ENCODE measurements at regions of chr6 and their contacts with region 1.

Region 1: GRCh38 chr6:7725849-7726415 is at the start of gene BMP6:
- DNase-seq: peak; percentile 96
- ATAC-seq: peak; percentile 95
- total RNA-seq, gene BMP6: 1.6 TPM

Region 2: DNA sequence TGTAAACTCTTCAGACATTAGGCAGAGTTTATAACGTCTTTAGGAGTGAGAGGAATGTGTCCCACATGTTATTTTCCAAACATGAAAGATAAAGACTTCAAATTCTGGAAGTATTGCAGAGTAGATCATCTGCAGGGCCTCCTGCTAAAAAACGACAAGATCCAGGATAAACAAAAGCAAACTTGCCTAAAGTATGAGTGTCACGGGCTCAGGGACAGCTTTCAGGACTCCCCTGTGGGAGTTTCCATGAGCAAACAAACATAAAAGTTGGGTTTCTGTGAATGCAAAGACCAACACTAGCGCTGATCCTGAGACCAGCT is 107.8 kb after region 1 on chr6:
- intact Hi-C with region 1: loop called (anchors 10 kb)
- DNase-seq: no peak
- ATAC-seq: no peak

Region 3: GRCh38 chr6:7910654-7911344 is 184.9 kb after region 1 on chr6 and contains the start of gene TXNDC5:
- intact Hi-C with region 1: loop called (anchors 5 kb)
- DNase-seq: peak; percentile 92
- ATAC-seq: peak; percentile 86
- total RNA-seq, gene TXNDC5: 42.0 TPM

Region 4: DNA sequence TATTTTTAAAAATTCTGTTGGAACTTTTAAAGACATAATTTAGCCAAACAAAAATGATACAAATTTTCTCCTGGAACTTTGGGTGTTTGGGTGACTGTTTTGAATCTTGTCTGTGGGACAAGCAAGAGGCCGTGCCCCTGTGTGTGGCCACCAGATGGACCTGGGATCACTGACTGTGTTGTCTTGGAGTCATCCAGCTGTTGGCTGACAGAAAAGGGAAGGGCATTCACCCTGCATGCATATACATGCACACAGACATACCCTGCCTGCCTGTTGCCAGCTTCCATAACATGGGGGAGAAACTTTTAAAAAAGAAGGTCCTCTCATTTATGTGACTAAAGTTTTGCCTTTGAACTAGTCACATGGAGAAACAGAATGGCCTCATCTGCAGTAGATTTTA is 265.6 kb after region 1 on chr6:
- intact Hi-C with region 1: loop called (anchors 1 kb)
- DNase-seq: no peak
- ATAC-seq: no peak

Region 5: GRCh38 chr6:8006208-8006607 is 280.3 kb after region 1 on chr6:
- intact Hi-C with region 1: loop called (anchors 1 kb)
- DNase-seq: no peak
- ATAC-seq: no peak

Region 6: DNA sequence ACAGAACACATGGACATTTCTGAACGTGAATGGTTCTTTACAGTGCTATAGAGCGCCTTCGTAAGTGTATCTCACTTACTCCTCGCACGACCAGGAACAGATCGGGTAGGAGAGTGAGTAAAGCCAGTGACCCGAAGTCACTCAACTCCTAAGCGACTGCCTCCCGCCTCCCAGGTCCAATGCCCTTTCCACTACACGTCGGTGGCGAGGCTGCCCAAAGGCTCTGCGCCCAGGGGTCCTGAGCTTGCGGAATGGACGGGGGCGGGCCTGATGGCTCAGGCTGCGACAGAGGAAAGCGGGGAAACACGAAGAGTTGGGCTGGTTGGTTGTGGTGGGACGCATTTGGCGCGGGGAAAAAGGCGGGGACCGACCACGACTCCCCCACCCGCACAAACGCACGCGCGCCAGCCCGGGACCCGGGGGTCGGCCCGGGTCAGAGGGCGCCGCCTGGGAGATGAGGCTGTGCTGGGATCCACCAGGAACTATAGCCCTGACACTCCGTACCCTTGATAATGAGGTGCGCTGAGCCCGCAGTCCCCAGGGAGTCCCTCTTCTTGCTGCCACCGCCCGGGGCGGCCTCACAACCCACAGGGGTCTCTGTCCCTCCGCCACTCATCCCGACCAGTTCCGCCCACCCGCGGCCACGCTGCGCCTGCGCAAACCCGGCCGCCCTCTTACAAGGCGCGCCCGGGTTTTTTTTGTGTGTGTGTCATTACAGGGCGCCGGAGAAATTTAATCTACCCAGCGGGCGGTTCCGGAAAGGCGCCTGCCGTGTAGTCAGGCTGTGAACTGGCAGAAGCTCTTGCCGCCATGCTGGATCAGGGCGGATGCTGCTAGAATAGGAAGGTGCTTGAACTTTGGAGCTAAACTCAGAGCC is 338.1 kb after region 1 on chr6 and contains the start of gene BLOC1S5:
- intact Hi-C with region 1: loop called (anchors 2 kb)
- DNase-seq: peak; percentile 98
- ATAC-seq: peak; percentile 99
- total RNA-seq, gene BLOC1S5: 8.1 TPM